ENCODE measurements at regions of chr4 and their contacts with region 1.

Region 1: DNA sequence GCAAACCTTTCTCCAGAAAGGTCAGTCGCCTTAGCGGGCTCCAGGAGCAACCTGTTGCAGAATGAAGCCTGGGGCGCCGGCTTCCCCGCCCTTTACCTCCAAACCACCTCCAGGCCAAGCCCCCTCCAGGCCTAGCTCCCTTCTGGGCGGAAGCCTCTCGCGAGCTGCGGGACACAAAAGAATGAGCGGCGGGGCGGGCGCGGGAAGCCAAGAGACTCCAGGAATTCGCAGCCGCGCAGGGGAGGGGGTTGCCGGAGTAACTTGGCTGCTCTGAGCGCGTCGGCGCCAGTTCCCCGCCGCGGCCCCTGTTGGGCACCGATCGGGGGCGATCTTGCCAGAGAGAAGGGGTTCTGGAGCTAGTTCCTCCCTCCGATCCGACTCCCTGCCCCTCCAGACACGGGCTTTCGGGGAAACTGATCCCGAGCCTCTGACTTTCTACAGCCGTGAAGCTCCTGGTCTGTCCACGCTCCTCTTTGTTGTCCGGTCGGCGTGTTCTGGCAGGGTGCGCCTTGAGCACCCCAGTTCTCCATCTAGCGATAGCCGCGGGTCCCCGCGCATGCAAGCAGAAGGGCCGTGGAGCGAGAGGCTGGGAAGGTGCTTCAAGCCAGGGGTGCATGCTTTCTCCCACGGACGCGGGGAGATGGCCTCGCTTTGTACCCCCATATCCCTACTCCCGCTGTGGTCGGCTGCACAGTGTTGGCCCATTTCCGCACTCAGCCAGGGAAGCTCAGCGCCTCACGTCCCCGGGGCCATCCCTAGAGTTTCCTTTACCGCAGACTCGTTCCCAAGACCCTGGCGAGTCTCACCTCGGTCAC is 1.2 kb downstream of the PROM1 start:
- DNase-seq: peak; percentile 39
- ATAC-seq: peak; percentile 76
- H3K4me3 ChIP-seq: peak overlapping the region; percentile 32 to 76 (median 61); a peak in 5 of 6 replicates
- H3K27ac ChIP-seq: no peak overlapping the region
- H3K4me1 ChIP-seq: peaks cover 16% of the 10 kb centered on the region
- H3K27me3 ChIP-seq: peaks cover 5 to 46% of the 10 kb centered on the region in 2 experiments; a peak in 4 of 5 replicates
- CTCF ChIP-seq: peak; percentile 32; the same call in 1 of the 2 replicates
- EP300 ChIP-seq: no peak
- POLR2A ChIP-seq: no peak
- RAD21 ChIP-seq: no peak

Region 2: DNA sequence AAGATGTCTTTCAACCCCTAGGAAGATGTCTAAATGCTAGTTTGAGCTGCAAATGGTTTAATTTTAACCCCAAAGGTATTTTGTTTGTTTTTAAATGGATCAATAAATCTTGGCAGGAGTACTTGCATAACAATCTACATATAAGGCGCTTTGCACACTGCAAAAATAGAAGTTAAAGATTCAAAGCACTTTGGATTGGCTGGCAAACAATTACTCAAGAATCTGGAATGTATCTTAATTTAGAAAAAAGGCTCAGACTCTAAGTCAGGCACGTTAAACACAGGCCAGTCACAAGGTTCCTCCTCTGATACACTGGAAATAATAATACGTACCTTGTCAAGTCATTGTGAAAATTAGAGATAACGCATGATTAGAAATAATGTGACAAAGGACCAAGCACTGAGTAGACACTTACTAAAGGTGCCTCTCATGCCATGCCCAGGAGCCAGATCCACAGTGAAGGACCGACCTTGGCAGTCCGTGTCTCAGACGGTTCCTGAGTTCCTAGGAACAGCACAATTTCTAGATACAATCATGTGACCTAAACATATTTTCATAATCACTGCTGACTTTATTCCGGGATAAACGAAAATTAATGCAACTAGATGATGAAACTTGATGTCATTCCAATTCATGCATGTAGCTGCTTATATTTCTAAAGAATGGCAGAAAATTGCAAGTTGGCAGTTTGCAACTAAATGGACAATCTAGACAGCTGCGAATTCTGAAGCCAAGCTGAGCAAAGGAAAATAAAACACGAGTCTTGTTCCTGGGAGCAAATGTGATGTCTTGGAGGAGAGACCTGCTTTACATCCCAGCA is 48.4 kb before region 1 on chr4:
- CTCF ChIA-PET with region 1: no interaction called
- POLR2A ChIA-PET with region 1: no interaction called
- in situ Hi-C with region 1: no loop called
- intact Hi-C with region 1: loop called (anchors 5 kb)
- DNase-seq: peak; percentile 83
- ATAC-seq: peak; percentile 82
- H3K4me3 ChIP-seq: no peak overlapping the region
- H3K27ac ChIP-seq: peak overlapping the region; percentile 36
- H3K4me1 ChIP-seq: peaks cover 64% of the 10 kb centered on the region
- H3K27me3 ChIP-seq: no peaks in the 10 kb centered on the region
- CTCF ChIP-seq: no peak
- EP300 ChIP-seq: peak in 1 of 2 experiments; percentile 78; a peak in 2 of 4 replicates
- POLR2A ChIP-seq: no peak
- RAD21 ChIP-seq: no peak

Region 3: GRCh38 chr4:16140520-16141249 is 58.1 kb after region 1 on chr4:
- CTCF ChIA-PET with region 1: no interaction called
- POLR2A ChIA-PET with region 1: interaction called, 3 read pairs
- in situ Hi-C with region 1: no loop called
- intact Hi-C with region 1: loop called (anchors 2 kb)
- DNase-seq: peak; percentile 99
- ATAC-seq: peak; percentile 99
- H3K4me3 ChIP-seq: no peak overlapping the region; a peak in 1 of 6 replicates
- H3K27ac ChIP-seq: peak overlapping the region; percentile 72
- H3K4me1 ChIP-seq: peaks cover 64% of the 10 kb centered on the region
- H3K27me3 ChIP-seq: no peaks in the 10 kb centered on the region; a peak in 1 of 5 replicates
- CTCF ChIP-seq: no peak
- EP300 ChIP-seq: peak in 1 of 2 experiments; percentile 87; a peak in 2 of 4 replicates
- POLR2A ChIP-seq: no peak
- RAD21 ChIP-seq: no peak

Region 4: DNA sequence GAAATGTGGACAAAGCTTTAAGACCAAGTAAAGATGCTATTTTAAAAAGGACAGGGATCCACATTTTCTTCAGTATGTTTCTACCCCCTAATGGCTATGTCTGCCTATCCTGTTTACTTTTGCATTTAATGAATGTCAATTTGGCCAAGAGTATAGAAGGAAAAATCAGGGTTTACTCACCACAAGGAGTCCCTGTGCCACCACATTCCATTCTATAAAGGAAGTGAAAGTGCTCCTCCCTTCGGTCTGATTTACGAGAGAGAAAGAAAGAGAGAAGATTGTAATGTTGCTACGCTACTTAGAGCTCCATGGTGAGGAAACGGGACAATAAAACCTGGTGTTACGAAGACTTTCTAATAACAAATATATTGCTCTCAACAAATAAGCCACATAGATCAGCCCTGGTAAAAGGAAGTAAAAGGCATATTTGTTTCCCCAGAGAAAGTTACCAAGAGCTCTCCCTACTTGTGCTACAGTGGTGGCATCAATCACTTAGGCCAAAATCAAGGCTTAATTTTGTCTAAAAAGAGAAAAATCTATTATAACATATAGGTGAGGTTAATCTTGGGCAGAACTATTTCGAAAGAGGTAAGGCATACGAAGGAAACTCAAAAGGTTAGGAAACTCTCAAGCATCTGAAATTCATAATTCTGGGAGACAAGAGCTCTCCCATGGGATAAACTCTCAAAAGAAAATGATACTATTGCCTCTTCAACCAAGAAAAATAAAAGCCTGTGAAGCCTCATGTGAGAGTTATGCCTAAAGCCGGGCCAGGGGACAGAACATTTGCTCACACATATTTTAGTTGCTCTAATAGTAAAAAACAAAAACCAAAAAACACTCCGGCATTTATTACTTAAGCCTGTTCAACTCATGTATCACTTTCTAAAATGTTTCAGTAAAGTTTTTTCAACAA is 114.1 kb after region 1 on chr4:
- CTCF ChIA-PET with region 1: no interaction called
- POLR2A ChIA-PET with region 1: no interaction called
- in situ Hi-C with region 1: no loop called
- intact Hi-C with region 1: loop called (anchors 2 kb)
- DNase-seq: peak; percentile 4
- ATAC-seq: no peak
- H3K4me3 ChIP-seq: no peak overlapping the region
- H3K27ac ChIP-seq: no peak overlapping the region
- H3K4me1 ChIP-seq: no peaks in the 10 kb centered on the region
- H3K27me3 ChIP-seq: no peaks in the 10 kb centered on the region
- CTCF ChIP-seq: no peak
- EP300 ChIP-seq: no peak
- POLR2A ChIP-seq: no peak
- RAD21 ChIP-seq: no peak

Region 5: DNA sequence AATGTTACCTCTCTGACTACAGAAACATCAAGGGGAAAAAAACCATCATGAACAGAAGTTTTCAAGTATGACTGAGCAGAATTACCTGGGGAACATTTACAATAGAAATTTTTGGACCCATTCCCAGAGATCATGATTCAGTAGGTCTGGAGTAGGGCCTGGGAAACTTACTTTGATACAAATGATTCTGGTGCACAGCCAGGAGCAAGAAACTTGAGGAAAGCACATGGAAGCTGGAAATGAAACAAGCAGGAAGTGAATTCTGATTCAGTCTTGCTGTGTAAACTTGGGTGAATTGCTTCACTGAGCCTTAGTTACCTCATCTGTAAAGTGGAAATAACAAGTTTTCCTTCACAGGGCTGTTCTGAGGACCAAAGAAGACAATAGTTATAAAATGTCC is 336.2 kb after region 1 on chr4:
- CTCF ChIA-PET with region 1: no interaction called
- POLR2A ChIA-PET with region 1: no interaction called
- in situ Hi-C with region 1: no loop called
- intact Hi-C with region 1: no loop called
- DNase-seq: no peak
- ATAC-seq: no peak
- H3K4me3 ChIP-seq: no peak overlapping the region
- H3K27ac ChIP-seq: no peak overlapping the region
- H3K4me1 ChIP-seq: no peaks in the 10 kb centered on the region
- H3K27me3 ChIP-seq: no peaks in the 10 kb centered on the region
- CTCF ChIP-seq: no peak
- EP300 ChIP-seq: no peak
- POLR2A ChIP-seq: no peak
- RAD21 ChIP-seq: no peak

Measured in HepG2 (cell line).